ENCODE measurements at regions of chr9 and their contacts with region 1.

Region 1: DNA sequence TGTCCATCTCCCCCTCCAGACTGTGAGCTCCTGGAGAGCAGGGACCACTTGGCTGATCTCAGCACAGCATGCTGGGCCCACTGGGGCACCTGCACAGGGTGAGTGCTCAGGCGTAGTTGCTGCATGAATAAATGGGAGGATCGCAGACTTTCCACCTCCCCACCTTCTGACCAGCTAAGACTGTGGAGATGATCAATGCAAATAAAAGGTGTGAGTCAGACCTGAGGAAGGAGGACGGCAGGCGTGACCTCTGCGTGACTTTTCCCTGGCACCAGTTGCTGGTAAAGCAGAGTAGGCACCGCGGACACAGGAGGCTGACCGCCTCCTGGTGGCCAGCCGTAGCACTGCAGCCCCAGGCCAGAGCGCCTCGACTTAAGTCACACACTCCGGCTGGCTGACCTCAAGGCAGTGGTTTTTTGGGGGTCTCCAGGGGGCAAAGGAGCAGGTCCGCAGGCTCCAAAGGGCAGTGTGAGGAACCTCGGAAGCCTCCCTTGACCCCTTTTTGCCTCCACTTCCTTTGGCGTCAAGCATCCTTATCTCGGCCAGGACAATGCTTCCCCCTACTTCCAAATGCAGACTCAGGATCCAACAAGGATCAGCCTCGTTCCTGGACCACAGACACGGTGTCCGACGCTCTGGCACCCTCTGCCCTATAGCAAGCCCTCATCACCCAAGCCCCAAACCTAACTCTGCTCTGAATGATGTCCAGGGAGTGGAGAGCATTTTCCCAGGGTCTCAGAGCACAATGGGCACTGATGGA is 12.7 kb upstream of the TDRD7 start:
- DNase-seq: peak; percentile 83
- ATAC-seq: peak; percentile 90
- H3K4me3 Mint-ChIP-seq: no peak overlapping the region
- H3K27ac Mint-ChIP-seq: no peak overlapping the region
- H3K4me1 Mint-ChIP-seq: peaks cover 4% of the 10 kb centered on the region
- H3K27me3 Mint-ChIP-seq: peaks cover 8% of the 10 kb centered on the region
- CTCF ChIP-seq: peak; percentile 99

Region 2: GRCh38 chr9:97411789-97412625 is 12.8 kb after region 1 on chr9 and contains the start of gene TDRD7:
- CTCF ChIA-PET with region 1: interaction called, 11 read pairs
- POLR2A ChIA-PET with region 1: no interaction called
- DNase-seq: peak; percentile 72
- ATAC-seq: peak; percentile 75
- H3K4me3 Mint-ChIP-seq: peak within 1 kb of the TSS; percentile 86
- H3K27ac Mint-ChIP-seq: no peak within 1 kb of the TSS
- H3K4me1 Mint-ChIP-seq: peaks cover 14% of the 10 kb centered on the region
- H3K27me3 Mint-ChIP-seq: peaks cover 60% of the 10 kb centered on the region
- CTCF ChIP-seq: peak; percentile 98
- total RNA-seq, gene TDRD7: 2.3 to 2.8 TPM (median 2.5 TPM) in 3 replicates

Measured in WTC11 (cell line).